Activated B cell treated with CpG ODN at 0.5 μM for 24 hours (primary cell): ENCODE measurements at regions of chr1 and their contacts with region 1.

Region 1: GRCh38 chr1:151762941-151763921 is at the start of gene MRPL9:
- DNase-seq: peak; percentile 80
- ATAC-seq: peak; percentile 99
- H3K4me3 Mint-ChIP-seq: peak within 1 kb of the TSS; percentile 92
- H3K27ac Mint-ChIP-seq: peak within 1 kb of the TSS; percentile 91
- H3K4me1 Mint-ChIP-seq: peaks cover 20% of the 10 kb centered on the region
- H3K27me3 Mint-ChIP-seq: no peaks in the 10 kb centered on the region
- CTCF ChIP-seq: no peak
- total RNA-seq, gene MRPL9: 96.2 and 105 TPM in 2 replicates

Region 2: GRCh38 chr1:151720974-151721787 is 42.0 kb before region 1 on chr1 and contains the start of gene RIIAD1:
- CTCF ChIA-PET with region 1: no interaction called
- POLR2A ChIA-PET with region 1: no interaction called
- intact Hi-C with region 1: loop called (anchors 1 kb)
- DNase-seq: peak; percentile 36
- ATAC-seq: peak; percentile 98
- H3K4me3 Mint-ChIP-seq: peak within 1 kb of the TSS; percentile 83
- H3K27ac Mint-ChIP-seq: peak within 1 kb of the TSS; percentile 35
- H3K4me1 Mint-ChIP-seq: peaks cover 27% of the 10 kb centered on the region
- H3K27me3 Mint-ChIP-seq: peaks cover 50% of the 10 kb centered on the region
- CTCF ChIP-seq: no peak
- total RNA-seq, gene RIIAD1: not detected in 2 replicates

Region 3: GRCh38 chr1:151753160-151753559 is 10.1 kb before region 1 on chr1:
- CTCF ChIA-PET with region 1: no interaction called
- POLR2A ChIA-PET with region 1: no interaction called
- intact Hi-C with region 1: no loop called
- DNase-seq: no peak
- ATAC-seq: no peak
- H3K4me3 Mint-ChIP-seq: no peak overlapping the region
- H3K27ac Mint-ChIP-seq: no peak overlapping the region
- H3K4me1 Mint-ChIP-seq: no peaks in the 10 kb centered on the region
- H3K27me3 Mint-ChIP-seq: peaks cover 22% of the 10 kb centered on the region
- CTCF ChIP-seq: no peak

Region 4: DNA sequence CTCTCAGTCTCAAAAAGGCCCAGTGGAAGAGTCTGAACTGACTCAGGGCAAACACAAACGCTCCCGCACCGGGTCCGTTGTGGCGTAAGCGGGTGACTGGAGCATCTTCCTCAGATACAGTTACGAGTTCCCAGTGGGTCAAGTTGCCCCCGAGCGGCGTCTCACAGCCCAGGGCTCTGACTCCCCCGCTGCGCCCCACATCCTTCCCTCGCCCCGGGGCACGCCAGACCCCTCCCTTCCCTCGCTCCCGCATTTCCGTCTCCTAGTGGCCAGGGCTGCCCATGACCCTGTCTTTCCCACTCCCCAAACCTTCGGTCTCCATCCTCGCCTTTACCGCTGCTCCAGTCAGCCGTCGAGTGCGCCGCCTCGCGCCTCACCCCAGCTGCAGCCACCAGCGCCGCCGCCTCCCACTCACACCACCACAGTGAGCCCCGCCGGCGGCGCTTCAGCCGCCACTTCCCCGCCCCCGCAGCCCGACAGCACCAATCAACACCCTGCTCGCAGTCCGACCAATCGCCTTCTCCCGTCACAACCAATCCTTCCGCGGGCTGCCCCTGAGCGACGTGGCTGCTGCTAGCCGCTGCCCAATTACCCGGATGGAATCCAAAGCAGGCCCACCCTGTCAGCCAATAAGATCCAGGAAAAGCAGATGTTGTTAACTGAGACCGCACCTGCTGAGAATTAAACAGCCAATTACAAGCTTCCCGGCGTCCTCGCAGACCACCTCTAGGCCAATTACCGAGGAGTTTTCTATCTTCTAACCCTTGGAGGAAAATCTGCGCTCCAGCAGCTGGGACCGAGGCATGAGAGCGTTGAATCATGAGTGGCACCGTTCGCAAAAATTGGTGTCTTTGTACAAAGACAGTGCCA is 27.1 kb after region 1 on chr1 and contains the start of gene TDRKH:
- CTCF ChIA-PET with region 1: no interaction called
- POLR2A ChIA-PET with region 1: interaction called, 33 read pairs
- intact Hi-C with region 1: loop called (anchors 1 kb)
- DNase-seq: peak; percentile 91
- ATAC-seq: peak; percentile 93
- H3K4me3 Mint-ChIP-seq: peak within 1 kb of the TSS; percentile 99
- H3K27ac Mint-ChIP-seq: peak within 1 kb of the TSS; percentile 91
- H3K4me1 Mint-ChIP-seq: peaks cover 21% of the 10 kb centered on the region
- H3K27me3 Mint-ChIP-seq: peaks cover 3% of the 10 kb centered on the region
- CTCF ChIP-seq: no peak
- total RNA-seq, gene TDRKH: 15.1 and 15.6 TPM in 2 replicates

Region 5: GRCh38 chr1:151888972-151889570 is 125.8 kb after region 1 on chr1:
- CTCF ChIA-PET with region 1: no interaction called
- POLR2A ChIA-PET with region 1: no interaction called
- intact Hi-C with region 1: no loop called
- DNase-seq: no peak
- ATAC-seq: peak; percentile 58
- H3K4me3 Mint-ChIP-seq: no peak overlapping the region
- H3K27ac Mint-ChIP-seq: no peak overlapping the region
- H3K4me1 Mint-ChIP-seq: peaks cover 9% of the 10 kb centered on the region
- H3K27me3 Mint-ChIP-seq: no peaks in the 10 kb centered on the region
- CTCF ChIP-seq: no peak

Region 6: GRCh38 chr1:151984313-151984956 is 221.2 kb after region 1 on chr1:
- CTCF ChIA-PET with region 1: no interaction called
- POLR2A ChIA-PET with region 1: no interaction called
- intact Hi-C with region 1: no loop called
- DNase-seq: no peak
- ATAC-seq: peak; percentile 18
- H3K4me3 Mint-ChIP-seq: no peak overlapping the region
- H3K27ac Mint-ChIP-seq: no peak overlapping the region
- H3K4me1 Mint-ChIP-seq: peaks cover 23% of the 10 kb centered on the region
- H3K27me3 Mint-ChIP-seq: peaks cover 3% of the 10 kb centered on the region
- CTCF ChIP-seq: no peak